ENCODE measurements at regions of chrX and their contacts with region 1.

Region 1: DNA sequence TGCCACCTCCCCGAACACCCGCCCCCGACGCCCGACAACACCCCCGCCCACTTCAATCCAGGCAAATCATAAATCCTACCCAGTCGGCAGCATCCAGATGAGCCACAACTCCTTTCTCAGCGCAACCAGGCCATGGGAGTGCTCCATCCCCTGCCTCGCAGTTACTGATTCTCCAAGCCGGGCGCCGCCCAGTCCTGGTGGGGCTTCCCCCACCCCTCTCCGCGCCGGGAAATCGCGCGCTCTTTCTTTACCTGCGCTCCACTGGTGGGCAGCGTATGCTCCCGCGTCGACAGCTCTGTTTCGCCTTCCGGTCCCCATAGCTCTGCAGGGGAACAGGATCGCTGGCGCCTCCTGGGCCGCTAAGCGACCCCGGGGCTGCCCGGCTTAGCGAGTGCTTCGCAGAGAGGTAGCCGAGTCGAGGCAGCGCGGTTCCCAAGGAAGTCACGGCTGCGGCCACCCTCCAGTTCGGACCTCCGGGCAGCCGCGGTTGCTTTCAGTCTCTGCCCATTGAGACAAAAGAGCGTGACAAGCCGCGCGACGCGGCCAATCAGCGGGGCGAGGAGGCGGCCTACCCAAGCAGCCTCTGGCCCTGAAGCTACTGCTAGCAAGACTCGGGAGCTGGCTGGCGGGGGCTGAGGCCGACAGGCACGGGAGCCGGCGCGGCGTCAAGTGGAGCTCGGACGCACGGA is 43.7 kb upstream of the TMSB15B start:
- DNase-seq: peak; percentile 68
- H3K4me3 ChIP-seq: peak overlapping the region; percentile 31 to 64 (median 52)
- H3K27ac ChIP-seq: peak overlapping the region; percentile 77 to 87 (median 84)
- H3K4me1 ChIP-seq: peaks cover 0 to 3% (median 0%) of the 10 kb centered on the region in 4 donors
- H3K27me3 ChIP-seq: no peaks in the 10 kb centered on the region
- CTCF ChIP-seq: no peak
- EP300 ChIP-seq: no peak
- POLR2A ChIP-seq: no peak

Region 2: GRCh38 chrX:103889231-103889630 is 29.5 kb before region 1 on chrX:
- in situ Hi-C with region 1: no loop called
- intact Hi-C with region 1: no loop called
- DNase-seq: no peak
- H3K4me3 ChIP-seq: no peak overlapping the region
- H3K27ac ChIP-seq: no peak overlapping the region
- H3K4me1 ChIP-seq: no peaks in the 10 kb centered on the region
- H3K27me3 ChIP-seq: no peaks in the 10 kb centered on the region
- CTCF ChIP-seq: no peak
- EP300 ChIP-seq: no peak
- POLR2A ChIP-seq: no peak

Region 3: DNA sequence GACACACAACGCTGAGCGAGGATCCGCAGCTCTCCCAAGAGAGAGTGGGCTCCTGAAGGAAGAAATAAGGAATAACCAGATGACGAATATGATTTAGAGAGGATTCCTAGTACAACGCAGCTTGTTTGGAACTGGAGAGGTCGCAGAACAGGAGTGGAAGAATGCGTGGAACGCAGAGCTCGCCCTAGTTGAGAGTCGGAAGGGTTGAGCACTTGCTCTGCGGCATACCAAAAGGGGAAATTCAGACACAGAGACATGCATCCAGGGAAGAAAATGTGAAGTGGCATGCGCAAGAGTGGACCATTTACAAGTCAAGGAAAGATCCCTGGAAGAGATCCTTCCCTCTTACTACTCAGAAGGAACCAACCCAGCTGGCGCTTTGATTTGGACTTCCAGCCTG is 88.5 kb after region 1 on chrX:
- in situ Hi-C with region 1: loop called in 1 of 4 experiments (anchors 5 kb)
- intact Hi-C with region 1: loop called (anchors 1 kb)
- DNase-seq: no peak
- H3K4me3 ChIP-seq: no peak overlapping the region
- H3K27ac ChIP-seq: no peak overlapping the region
- H3K4me1 ChIP-seq: no peaks in the 10 kb centered on the region
- H3K27me3 ChIP-seq: no peaks in the 10 kb centered on the region
- CTCF ChIP-seq: no peak
- EP300 ChIP-seq: no peak
- POLR2A ChIP-seq: no peak

Region 4: DNA sequence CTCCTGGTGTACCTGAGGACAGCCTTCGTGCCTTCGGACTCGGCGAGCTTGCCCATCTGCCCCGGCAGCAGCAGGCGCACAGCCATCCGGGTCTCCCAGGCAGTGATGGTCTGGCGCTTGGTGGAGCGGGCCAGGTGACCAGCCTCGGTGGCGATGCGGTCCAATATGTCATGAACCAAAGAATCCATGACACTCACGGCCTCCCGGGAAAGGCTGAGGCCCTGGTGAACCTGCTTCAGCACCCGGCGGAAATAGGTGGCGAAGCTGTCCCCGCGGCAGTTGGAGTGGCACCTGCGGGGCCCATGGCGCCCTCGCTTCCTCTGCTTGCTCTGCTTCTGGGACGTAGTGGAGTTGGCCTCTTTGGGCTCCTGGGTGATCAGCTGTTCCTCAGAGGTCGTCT is 94.4 kb after region 1 on chrX:
- in situ Hi-C with region 1: loop called in 1 of 4 experiments (anchors 5 kb)
- intact Hi-C with region 1: no loop called
- DNase-seq: no peak
- H3K4me3 ChIP-seq: no peak overlapping the region
- H3K27ac ChIP-seq: no peak overlapping the region
- H3K4me1 ChIP-seq: no peaks in the 10 kb centered on the region
- H3K27me3 ChIP-seq: no peaks in the 10 kb centered on the region
- CTCF ChIP-seq: no peak
- EP300 ChIP-seq: no peak
- POLR2A ChIP-seq: no peak

Region 5: GRCh38 chrX:104189837-104190236 is 271.1 kb after region 1 on chrX:
- in situ Hi-C with region 1: no loop called
- intact Hi-C with region 1: no loop called
- DNase-seq: no peak
- H3K4me3 ChIP-seq: no peak overlapping the region
- H3K27ac ChIP-seq: no peak overlapping the region
- H3K4me1 ChIP-seq: no peaks in the 10 kb centered on the region
- H3K27me3 ChIP-seq: no peaks in the 10 kb centered on the region
- CTCF ChIP-seq: no peak
- EP300 ChIP-seq: no peak
- POLR2A ChIP-seq: no peak